ENCODE measurements at regions of chr3 and their contacts with region 1.

Region 1: DNA sequence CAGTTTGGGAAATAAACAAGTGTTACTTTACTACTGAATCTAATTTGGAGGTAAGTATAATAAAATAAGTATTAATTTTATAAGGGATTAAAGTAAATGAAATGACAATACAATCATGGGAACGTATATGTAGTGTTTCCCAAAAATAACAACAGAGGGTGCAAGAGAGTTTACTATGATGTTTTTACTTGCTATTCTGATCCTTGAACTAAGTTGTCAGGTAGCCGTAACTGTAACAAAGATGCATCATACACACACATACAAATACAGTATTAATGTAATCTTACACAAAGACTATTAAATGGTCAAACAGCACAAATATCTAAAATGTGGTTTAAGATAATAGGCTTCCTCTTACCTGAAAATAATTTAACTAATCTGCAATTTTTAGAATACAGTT is 311.4 kb downstream of the TBC1D5 start:
- DNase-seq: no peak
- ATAC-seq: peak; percentile 49
- H3K4me3 ChIP-seq: no peak overlapping the region
- H3K4me1 ChIP-seq: no peaks in the 10 kb centered on the region
- CTCF ChIP-seq: no peak

Region 2: DNA sequence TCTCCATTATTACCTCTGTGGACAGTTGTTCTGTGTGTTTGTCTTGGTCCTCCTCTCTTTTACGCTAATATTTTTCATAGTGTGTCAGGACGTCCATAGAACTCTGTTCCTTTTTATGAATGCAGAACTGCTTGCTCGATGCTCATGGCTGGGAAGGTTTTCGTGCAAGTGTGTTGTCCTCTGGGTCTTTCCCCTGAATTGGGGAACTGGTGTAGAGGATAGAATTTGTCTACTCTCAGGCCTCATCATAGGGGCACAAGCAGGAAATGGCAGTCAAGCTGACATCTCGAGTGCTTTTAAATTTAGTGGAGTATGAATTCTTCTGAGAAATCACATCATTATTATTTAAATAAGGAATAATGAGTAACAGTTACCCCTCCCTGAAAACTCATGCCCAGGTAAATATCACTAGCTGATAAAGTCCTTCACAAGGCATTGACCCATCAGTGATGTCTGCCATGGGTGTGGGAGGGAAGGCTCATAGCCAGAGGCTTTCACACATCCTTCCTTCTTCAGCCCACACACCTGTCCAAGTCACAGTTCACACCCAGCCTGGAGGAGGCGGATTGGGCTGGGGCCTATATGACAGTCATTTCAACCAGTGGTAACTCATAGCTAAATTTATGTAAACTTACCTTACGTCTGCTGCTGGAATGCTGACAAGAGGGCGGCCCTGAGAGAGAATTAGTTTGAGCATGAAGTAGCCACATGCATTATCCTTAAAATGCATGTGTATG is 320.2 kb before region 1 on chr3:
- intact Hi-C with region 1: no loop called
- DNase-seq: no peak
- ATAC-seq: no peak
- H3K4me3 ChIP-seq: no peak overlapping the region
- H3K4me1 ChIP-seq: no peaks in the 10 kb centered on the region
- CTCF ChIP-seq: no peak

Region 3: GRCh38 chr3:17841190-17841828 is 410.3 kb after region 1 on chr3:
- intact Hi-C with region 1: loop called in 1 of 2 experiments (anchors 10 kb)
- DNase-seq: peak; percentile 62 to 81 (median 78)
- ATAC-seq: peak; percentile 90
- H3K4me3 ChIP-seq: no peak overlapping the region
- H3K4me1 ChIP-seq: no peaks in the 10 kb centered on the region
- CTCF ChIP-seq: peak; percentile 73

Measured in mucosa of descending colon (tissue), 3 donors.